ENCODE measurements at regions of chr17 and their contacts with region 1.

Region 1: DNA sequence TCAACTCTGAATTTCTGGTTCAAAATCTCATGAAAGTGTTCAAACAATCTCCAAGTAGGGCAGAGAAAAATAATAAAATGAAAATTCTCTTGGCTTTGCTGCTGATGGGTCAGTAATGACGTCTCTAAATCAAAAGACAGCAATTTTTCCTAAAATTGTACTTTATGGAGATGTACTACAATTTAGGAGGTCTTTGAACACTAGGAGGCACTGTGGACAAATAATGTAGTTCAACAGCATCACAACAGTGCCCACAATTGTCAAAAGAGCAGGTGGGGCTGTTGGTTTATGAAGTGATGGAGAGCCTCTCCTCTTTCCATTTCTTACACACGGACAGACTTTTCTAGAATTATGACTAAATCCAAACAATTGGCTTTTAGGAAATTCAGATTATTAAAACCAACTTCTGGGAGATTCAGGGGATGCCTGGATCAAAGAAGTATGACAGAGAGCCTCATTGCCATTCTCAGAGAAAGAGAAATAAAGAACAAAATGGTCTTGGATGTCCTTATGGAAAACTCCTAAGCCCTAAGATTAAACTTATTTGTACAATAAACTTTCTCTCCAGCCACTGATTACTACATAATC is 23.8 kb downstream of the EZH1 start:
- DNase-seq: no peak
- ATAC-seq: peak; percentile 86

Region 2: DNA sequence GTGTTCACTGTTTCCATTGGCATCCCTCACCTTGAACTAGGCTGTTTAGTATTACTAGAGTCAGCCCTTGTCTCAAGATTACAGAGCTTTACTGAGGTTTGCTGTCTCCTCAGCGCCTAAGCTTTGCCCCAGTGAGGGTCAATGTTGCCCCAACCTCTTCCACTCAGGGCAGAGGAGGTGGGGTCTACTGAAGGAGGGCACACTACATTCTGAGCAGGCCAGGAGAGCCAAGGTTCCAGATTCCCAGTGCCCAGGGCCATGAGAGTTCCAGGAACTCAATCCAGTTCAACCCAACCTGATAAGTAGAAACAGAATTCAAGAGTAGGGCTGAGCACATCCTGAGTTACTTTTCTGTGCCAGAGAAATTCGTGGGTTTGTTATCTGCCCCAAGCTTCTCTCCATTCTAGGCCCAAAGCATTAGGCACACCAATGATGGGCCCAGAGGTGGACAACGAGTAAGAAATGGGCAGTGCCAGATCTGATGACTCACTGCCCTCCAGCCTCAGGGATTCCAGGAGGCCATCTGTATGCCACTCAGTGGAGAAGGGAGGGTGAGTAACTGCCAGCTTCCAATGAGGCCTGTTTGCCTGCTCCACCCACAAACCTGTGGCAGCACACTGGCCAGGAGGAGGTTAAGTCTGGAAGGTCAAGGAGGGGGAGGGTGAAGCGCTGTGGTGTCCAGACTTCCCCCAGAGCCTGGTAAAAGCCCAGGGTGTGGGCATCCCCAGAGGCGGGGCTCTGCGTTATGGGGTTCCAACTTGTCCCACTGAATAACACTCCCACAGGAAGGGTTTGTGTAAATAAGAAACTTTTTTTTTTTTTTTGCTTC is 53.8 kb before region 1 on chr17:
- intact Hi-C with region 1: no loop called
- DNase-seq: peak; percentile 50 to 80
- ATAC-seq: peak; percentile 89

Region 3: GRCh38 chr17:42760652-42761581 is 39.8 kb after region 1 on chr17 and contains the start of gene RAMP2:
- intact Hi-C with region 1: loop called in 1 of 2 experiments (anchors 5 kb)
- DNase-seq: peak in 1 of 2 donors; percentile 41
- ATAC-seq: peak; percentile 67
- total RNA-seq, gene RAMP2: 5.0 to 7.7 TPM

Region 4: GRCh38 chr17:42819944-42820535 is 99.0 kb after region 1 on chr17:
- intact Hi-C with region 1: loop called in 1 of 2 experiments (anchors 10 kb)
- DNase-seq: peak; percentile 49 to 77
- ATAC-seq: no peak

Region 5: DNA sequence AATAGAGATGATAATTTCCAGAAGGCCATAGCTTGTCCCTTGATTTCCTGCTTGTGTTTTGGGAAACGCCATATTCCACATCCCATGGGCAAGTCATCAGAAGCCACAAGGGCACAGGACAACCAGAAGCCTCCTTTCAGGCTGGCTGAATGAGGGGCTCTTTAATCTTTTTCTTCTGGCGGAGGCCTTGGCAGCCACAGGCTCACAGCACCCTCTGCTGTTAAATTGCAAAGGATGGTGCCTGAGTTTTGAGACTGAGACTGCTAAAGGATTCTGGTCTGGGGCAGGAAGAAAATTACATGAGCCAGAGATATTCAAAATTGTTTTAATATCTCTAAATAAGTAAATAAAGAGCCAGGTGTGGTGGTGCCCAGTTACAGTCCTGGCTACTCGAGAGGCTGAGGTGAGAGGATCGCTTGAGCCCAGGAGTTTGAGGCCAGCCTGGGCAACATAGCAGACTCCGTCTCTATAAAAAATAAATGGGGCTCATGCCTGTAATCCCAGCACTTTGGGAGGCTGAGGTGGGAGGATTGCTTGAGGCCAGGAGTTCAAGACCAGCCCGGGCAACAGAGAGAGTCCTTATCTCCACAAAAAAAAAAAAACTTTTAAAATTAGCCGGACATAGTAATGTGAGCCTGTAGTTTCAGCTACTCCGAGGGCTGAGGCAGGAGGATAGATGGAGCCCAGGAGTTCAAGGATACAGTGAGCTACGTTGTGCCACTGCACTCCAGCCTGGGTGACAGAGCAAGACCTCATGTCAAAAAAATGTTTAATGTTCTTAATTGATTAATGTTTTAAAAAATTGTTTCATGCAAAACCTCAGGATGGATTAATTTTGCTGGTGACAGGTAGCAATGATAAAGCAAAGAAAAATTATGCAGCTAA is 216.9 kb after region 1 on chr17:
- intact Hi-C with region 1: loop called in 1 of 2 experiments (anchors 10 kb)
- DNase-seq: peak in 1 of 2 donors; percentile 23
- ATAC-seq: peak; percentile 77

Measured in left colon (tissue), 2 donors.